ENCODE measurements at regions of chr1 and their contacts with region 1.

Region 1: GRCh38 chr1:77533660-77534305 is 148.7 kb downstream of the ZZZ3 start:
- DNase-seq: peak; percentile 56 to 73
- H3K4me3 ChIP-seq: no peak overlapping the region
- H3K4me1 ChIP-seq: no peaks in the 10 kb centered on the region
- H3K27me3 ChIP-seq: no peaks in the 10 kb centered on the region

Region 2: DNA sequence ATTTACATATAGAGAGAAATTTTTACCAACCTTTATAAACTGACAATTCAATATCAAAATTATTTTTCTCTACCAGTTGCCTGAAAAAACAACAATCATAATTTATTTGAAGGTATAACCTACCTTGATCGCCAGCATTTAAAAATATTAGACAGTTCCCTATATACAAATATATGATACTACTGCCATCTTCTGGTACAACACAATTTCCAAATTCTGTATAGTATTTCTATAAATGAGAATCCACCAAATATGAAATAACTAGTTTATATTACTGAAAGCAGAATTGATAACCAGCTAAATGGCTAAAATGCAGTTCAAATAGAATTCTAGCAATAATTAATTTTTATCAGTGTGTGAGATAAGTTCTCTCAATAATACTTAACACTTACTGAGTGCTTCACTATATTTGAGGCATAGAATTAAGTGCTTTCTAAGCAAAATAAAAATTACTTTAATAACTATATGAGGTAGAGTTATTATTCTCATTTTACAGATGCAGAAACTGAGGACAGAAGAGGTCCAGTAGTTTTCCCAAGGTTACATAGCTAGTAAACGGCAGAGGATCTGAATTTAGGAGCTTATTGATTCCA is 390.2 kb before region 1 on chr1:
- in situ Hi-C with region 1: loop called (anchors 10 kb)
- DNase-seq: no peak
- H3K4me3 ChIP-seq: no peak overlapping the region
- H3K4me1 ChIP-seq: no peaks in the 10 kb centered on the region
- H3K27me3 ChIP-seq: no peaks in the 10 kb centered on the region

Region 3: GRCh38 chr1:77413541-77414335 is 120.0 kb before region 1 on chr1:
- in situ Hi-C with region 1: no loop called
- DNase-seq: no peak
- H3K4me3 ChIP-seq: no peak overlapping the region
- H3K4me1 ChIP-seq: no peaks in the 10 kb centered on the region
- H3K27me3 ChIP-seq: 0 out of 2 replicates have a peak, but pooled peaks cover 6% of the 10 kb centered on the region

Region 4: GRCh38 chr1:77473690-77474089 is 60.1 kb before region 1 on chr1:
- in situ Hi-C with region 1: no loop called
- DNase-seq: no peak
- H3K4me3 ChIP-seq: no peak overlapping the region
- H3K4me1 ChIP-seq: no peaks in the 10 kb centered on the region
- H3K27me3 ChIP-seq: peaks cover 3% of the 10 kb centered on the region; the same call in 1 of the 2 replicates

Region 5: GRCh38 chr1:77857552-77857951 is 323.8 kb after region 1 on chr1:
- in situ Hi-C with region 1: no loop called
- DNase-seq: no peak
- H3K4me3 ChIP-seq: no peak overlapping the region
- H3K4me1 ChIP-seq: no peaks in the 10 kb centered on the region
- H3K27me3 ChIP-seq: no peaks in the 10 kb centered on the region

Measured in HAP-1 (cell line).